HEK293 (cell line): ENCODE measurements at regions of chr9 and their contacts with region 1.

Region 1: GRCh38 chr9:32526041-32526706 is at the start of gene RIGI:
- H3K4me3 ChIP-seq: peak within 1 kb of the TSS; percentile 53
- H3K27ac ChIP-seq: peak within 1 kb of the TSS; percentile 69
- H3K4me1 ChIP-seq: peaks cover 4% of the 10 kb centered on the region; the same call in 1 of the 2 replicates
- CTCF ChIP-seq: peak; percentile 10; the same call in 1 of the 2 replicates

Region 2: DNA sequence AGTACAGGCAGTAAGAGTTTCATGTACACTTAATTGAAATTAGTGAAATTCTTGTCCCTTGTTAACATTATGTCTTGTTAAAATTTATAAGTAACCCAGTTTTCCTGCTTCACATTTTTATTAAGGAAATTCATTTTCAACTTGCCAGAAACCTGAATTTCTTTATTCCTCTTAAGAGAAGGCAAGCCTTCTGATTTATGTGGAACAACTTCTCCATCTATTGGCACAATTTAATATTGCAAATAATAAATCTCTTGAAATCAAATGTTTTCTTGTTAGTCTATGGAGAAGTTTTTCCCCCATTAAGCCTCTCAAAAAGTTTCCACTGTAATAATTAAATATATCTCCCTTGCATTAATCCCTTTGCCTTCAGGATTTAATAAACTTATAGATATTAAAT is 175.5 kb before region 1 on chr9:
- CTCF ChIA-PET with region 1: no interaction called
- POLR2A ChIA-PET with region 1: no interaction called
- H3K4me3 ChIP-seq: no peak overlapping the region
- H3K27ac ChIP-seq: no peak overlapping the region
- H3K4me1 ChIP-seq: no peaks in the 10 kb centered on the region
- CTCF ChIP-seq: no peak

Region 3: GRCh38 chr9:32384364-32385151 is 141.6 kb before region 1 on chr9 and contains the start of gene ACO1:
- CTCF ChIA-PET with region 1: interaction called, 130 read pairs
- POLR2A ChIA-PET with region 1: interaction called, 31 read pairs
- H3K4me3 ChIP-seq: peak within 1 kb of the TSS; percentile 92
- H3K27ac ChIP-seq: peak within 1 kb of the TSS; percentile 41; the same call in 1 of the 2 replicates
- H3K4me1 ChIP-seq: no peaks in the 10 kb centered on the region
- CTCF ChIP-seq: no peak

Region 4: GRCh38 chr9:32413424-32413823 is 112.8 kb before region 1 on chr9:
- CTCF ChIA-PET with region 1: interaction called, 11 read pairs
- POLR2A ChIA-PET with region 1: interaction called, 4 read pairs
- H3K4me3 ChIP-seq: no peak overlapping the region
- H3K27ac ChIP-seq: no peak overlapping the region
- H3K4me1 ChIP-seq: no peaks in the 10 kb centered on the region
- CTCF ChIP-seq: no peak

Region 5: DNA sequence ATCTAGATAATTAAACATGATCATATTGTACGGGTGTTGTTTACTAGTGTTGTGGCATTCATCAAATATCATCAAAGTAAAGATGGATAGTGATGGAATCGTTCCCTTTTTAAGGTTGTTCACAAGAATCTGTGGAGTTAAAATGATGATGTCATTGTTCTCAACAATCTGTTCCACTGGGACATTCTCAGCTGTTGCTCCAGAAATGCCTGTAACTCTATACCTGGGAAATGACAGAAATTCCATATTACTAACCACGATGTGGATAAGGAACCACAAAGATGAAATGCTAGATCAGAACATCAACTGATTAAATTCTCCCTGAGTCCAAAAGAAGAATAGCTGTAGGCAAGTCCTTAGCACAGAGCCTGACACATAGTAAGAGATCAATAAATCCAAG is 38.2 kb before region 1 on chr9:
- CTCF ChIA-PET with region 1: interaction called, 29 read pairs
- POLR2A ChIA-PET with region 1: interaction called, 8 read pairs
- H3K4me3 ChIP-seq: no peak overlapping the region
- H3K27ac ChIP-seq: no peak overlapping the region
- H3K4me1 ChIP-seq: no peaks in the 10 kb centered on the region
- CTCF ChIP-seq: no peak

Region 6: GRCh38 chr9:32550562-32551433 is 24.6 kb after region 1 on chr9:
- CTCF ChIA-PET with region 1: interaction called, 8 read pairs
- POLR2A ChIA-PET with region 1: interaction called, 36 read pairs
- H3K4me3 ChIP-seq: peak overlapping the region; percentile 84
- H3K27ac ChIP-seq: peak overlapping the region; percentile 91
- H3K4me1 ChIP-seq: 0 out of 2 replicates have a peak, but pooled peaks cover 4% of the 10 kb centered on the region
- CTCF ChIP-seq: peak; percentile 65; the same call in 1 of the 2 replicates

Region 7: DNA sequence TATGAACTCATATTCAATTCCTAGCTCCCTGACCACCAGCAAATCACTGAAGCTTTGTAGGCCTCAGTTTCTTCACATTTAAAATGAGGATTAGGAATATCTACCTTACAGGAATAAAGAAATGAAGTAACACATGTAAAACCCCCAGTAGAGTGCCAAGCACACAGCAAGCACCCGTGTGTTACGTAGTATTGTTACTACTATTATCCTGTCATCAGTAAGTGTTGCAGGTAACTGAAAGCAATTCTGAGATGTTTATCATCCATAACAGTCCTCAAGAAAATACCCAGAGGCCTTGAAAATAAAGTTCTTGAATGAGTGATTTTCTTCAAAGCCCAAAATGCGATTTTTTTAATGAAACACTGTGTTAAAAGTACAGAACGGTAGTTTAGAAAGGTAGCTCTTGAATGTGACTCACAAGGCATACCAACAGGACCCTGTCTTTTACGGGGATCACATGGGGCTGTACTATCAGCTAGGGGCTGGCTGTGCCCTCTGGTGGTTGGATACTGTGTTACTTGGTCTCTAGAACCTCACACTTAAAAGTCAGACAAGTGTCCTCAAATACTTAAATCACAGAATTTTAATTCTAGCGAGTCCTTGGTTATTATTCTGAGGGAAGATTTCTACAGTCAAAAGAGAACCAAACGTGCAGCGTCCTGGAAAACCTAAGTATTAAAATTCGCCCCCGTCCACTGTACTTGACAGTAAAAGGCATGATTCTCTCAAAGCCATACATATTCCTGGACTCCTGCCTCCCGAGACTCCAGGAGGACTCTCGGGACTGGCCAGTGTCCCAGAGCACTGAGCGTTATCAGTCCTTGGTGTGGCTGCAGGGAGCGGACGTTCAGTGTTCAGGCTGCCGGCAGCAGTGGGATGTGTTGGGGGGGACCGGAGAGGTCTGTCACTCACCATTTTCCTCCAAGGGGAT is 46.1 kb after region 1 on chr9:
- CTCF ChIA-PET with region 1: interaction called, 14 read pairs
- POLR2A ChIA-PET with region 1: interaction called, 4 read pairs
- H3K4me3 ChIP-seq: peak overlapping the region; percentile 57
- H3K27ac ChIP-seq: peak overlapping the region; percentile 64
- H3K4me1 ChIP-seq: peaks cover 4% of the 10 kb centered on the region; the same call in 1 of the 2 replicates
- CTCF ChIP-seq: 0 out of 2 replicates have a peak, but pooled peaks have one; percentile 19

Region 8: DNA sequence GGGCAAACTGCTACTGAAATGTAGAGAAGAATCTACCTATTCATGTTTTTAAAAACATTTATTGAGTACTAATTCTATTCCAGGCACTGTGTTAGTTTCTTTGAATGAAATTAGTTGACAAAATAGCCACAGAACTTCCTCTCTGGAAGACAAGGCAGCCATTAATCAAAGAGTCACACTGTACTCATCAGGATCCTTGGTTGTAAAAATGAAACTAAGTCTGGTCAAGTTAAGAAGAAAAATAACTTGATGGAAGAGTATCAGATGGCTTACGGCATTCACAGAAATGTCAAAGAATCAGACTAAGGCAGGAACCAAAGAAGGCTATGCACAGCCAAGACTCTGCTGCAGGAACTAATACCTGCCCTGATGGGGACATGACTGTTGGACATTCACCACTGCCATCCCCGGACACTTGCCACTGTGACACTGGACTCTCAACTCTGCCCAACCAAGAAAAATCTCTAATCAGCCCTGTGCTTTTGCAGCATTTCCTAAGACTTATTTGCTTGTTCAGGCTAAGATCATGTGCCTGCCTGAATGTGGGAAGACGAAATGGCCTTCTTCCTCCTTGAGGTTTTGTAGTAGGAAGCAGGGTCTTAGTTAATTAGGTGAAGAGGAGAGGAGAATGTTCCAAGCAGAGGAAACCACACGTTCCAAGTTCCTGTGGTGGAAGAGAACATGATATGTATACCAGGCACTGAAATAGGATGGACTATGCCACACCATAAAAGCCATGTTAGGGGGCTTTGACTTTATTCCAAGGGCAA is 70.1 kb after region 1 on chr9:
- CTCF ChIA-PET with region 1: no interaction called
- POLR2A ChIA-PET with region 1: no interaction called
- H3K4me3 ChIP-seq: no peak overlapping the region
- H3K27ac ChIP-seq: no peak overlapping the region
- H3K4me1 ChIP-seq: no peaks in the 10 kb centered on the region
- CTCF ChIP-seq: no peak

Region 9: DNA sequence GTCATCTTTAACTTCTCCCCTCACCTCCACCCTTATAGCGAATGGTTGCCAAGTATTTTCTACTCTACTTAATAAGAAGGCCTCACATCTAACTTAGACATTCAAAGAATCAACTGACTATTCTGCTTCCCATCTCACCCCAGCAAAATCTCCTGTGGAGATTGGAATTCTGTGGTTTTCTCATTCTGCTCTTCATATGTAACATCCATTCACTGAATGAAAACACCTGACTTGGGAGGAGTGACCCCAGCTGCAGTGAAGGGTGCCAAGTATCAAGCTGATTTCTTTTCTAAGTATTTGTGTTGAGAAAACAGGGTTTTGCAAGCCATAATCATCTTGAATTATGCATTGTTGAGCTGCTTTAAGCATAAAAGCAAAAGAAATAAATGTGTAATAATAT is 151.8 kb after region 1 on chr9:
- CTCF ChIA-PET with region 1: no interaction called
- POLR2A ChIA-PET with region 1: no interaction called
- H3K4me3 ChIP-seq: no peak overlapping the region
- H3K27ac ChIP-seq: no peak overlapping the region
- H3K4me1 ChIP-seq: no peaks in the 10 kb centered on the region
- CTCF ChIP-seq: no peak